CD8-positive, alpha-beta T cell (primary cell): ENCODE measurements at regions of chr2 and their contacts with region 1.

Region 1: GRCh38 chr2:159249984-159250715 is 36.4 kb downstream of the WDSUB1 start:
- DNase-seq: peak in 1 of 9 experiments; percentile 30
- ATAC-seq: no peak
- H3K4me3 ChIP-seq: no peak overlapping the region
- H3K4me3 Mint-ChIP-seq: no peak overlapping the region
- H3K27ac ChIP-seq: no peak overlapping the region
- H3K27ac Mint-ChIP-seq: no peak overlapping the region
- H3K4me1 ChIP-seq: no peaks in the 10 kb centered on the region
- H3K4me1 Mint-ChIP-seq: peaks cover 2% of the 10 kb centered on the region
- H3K27me3 ChIP-seq: no peaks in the 10 kb centered on the region
- H3K27me3 Mint-ChIP-seq: no peaks in the 10 kb centered on the region
- CTCF ChIP-seq: no peak

Region 2: DNA sequence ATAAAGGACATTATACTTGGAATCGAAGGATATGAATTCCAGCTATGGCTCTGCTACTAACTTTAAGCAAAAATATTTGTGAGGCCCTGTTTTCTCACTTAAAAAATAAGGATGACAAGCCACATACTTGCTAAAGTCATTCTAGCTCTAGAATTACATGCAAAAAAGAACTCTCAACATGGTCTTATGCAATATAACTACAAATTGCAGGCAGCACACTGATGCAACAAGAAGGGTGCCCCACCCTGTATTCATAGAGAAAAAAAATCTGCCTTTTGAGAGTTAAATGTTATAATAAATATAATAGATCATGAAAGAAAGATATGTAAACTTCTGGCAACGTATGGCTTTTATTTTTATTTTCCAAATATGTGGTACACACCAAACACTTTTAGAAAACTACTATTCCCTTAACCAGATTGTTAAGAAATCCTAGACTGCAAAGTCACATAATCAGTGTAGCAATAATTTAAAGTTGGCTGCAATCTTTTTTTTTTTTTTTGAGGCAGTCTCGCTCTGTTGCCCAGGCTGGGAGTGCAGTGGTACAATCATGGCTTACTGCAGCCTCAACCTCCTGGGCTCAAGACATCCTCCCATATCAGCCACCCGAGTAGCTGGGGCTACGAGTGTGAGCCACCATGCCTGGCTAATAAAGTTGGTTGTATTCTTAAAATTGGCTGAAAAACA is 76.6 kb after region 1 on chr2:
- CTCF ChIA-PET with region 1: no interaction called
- POLR2A ChIA-PET with region 1: no interaction called
- intact Hi-C with region 1: loop called in 1 of 2 experiments (anchors 5 kb)
- DNase-seq: no peak
- ATAC-seq: no peak
- H3K4me3 ChIP-seq: no peak overlapping the region
- H3K4me3 Mint-ChIP-seq: no peak overlapping the region
- H3K27ac ChIP-seq: no peak overlapping the region
- H3K27ac Mint-ChIP-seq: no peak overlapping the region
- H3K4me1 ChIP-seq: no peaks in the 10 kb centered on the region
- H3K4me1 Mint-ChIP-seq: no peaks in the 10 kb centered on the region
- H3K27me3 ChIP-seq: no peaks in the 10 kb centered on the region
- H3K27me3 Mint-ChIP-seq: no peaks in the 10 kb centered on the region
- CTCF ChIP-seq: no peak